Pancreas (tissue), 10 donors: ENCODE measurements at regions of chr14 and their contacts with region 1.

Region 1: GRCh38 chr14:31326111-31326510 is 94.2 kb downstream of the HEATR5A start:
- DNase-seq: no peak
- ATAC-seq: no peak
- H3K4me3 ChIP-seq: no peak overlapping the region
- H3K27ac ChIP-seq: no peak overlapping the region
- H3K4me1 ChIP-seq: peaks cover 0 to 4% (median 0%) of the 10 kb centered on the region in 3 donors
- H3K27me3 ChIP-seq: no peaks in the 10 kb centered on the region
- CTCF ChIP-seq: no peak

Region 2: DNA sequence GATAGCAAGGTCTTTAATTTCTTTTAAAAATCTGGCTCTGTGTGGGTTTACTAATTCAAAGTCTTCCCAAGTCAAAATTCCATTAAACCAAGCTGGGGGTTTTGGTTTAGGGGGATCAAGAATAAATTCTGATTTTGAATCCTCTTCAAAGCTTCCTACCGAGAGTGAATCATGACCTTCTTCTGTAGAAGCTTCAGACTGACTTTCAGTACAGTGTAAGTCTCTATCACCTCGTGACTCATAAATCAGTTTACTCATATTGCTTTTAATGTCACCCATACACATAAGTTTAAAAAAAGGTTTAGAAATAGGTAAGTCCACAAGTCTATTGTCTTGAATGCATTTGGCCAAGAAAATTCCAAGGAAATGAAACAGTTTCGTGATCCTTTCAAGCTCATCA is 219.3 kb before region 1 on chr14:
- intact Hi-C with region 1: no loop called
- DNase-seq: no peak
- ATAC-seq: no peak
- H3K4me3 ChIP-seq: no peak overlapping the region
- H3K27ac ChIP-seq: no peak overlapping the region
- H3K4me1 ChIP-seq: no peaks in the 10 kb centered on the region
- H3K27me3 ChIP-seq: no peaks in the 10 kb centered on the region
- CTCF ChIP-seq: no peak

Region 3: GRCh38 chr14:31207755-31208545 is 118.2 kb before region 1 on chr14 and contains the start of gene HECTD1:
- intact Hi-C with region 1: loop called in 1 of 3 experiments (anchors 10 kb)
- DNase-seq: peak; percentile 76 to 95 (median 92)
- ATAC-seq: peak; percentile 89 to 94 (median 92)
- H3K4me3 ChIP-seq: peak within 1 kb of the TSS; percentile 69 to 95 (median 81)
- H3K27ac ChIP-seq: peak within 1 kb of the TSS; percentile 95 to 99 (median 98)
- H3K4me1 ChIP-seq: peaks cover 4 to 22% (median 9%) of the 10 kb centered on the region in 3 donors
- H3K27me3 ChIP-seq: no peaks in the 10 kb centered on the region
- CTCF ChIP-seq: peak; percentile 79 to 90 (median 89)
- total RNA-seq, gene HECTD1: 67.3 to 84.4 (median 70.0) TPM

Region 4: GRCh38 chr14:31479027-31479426 is 152.9 kb after region 1 on chr14:
- intact Hi-C with region 1: no loop called
- DNase-seq: no peak
- ATAC-seq: no peak
- H3K4me3 ChIP-seq: no peak overlapping the region
- H3K27ac ChIP-seq: no peak overlapping the region
- H3K4me1 ChIP-seq: no peaks in the 10 kb centered on the region
- H3K27me3 ChIP-seq: no peaks in the 10 kb centered on the region
- CTCF ChIP-seq: no peak